Right ventricle myocardium inferior (tissue), 1 donor: ENCODE measurements at regions of chr9 and their contacts with region 1.

Region 1: DNA sequence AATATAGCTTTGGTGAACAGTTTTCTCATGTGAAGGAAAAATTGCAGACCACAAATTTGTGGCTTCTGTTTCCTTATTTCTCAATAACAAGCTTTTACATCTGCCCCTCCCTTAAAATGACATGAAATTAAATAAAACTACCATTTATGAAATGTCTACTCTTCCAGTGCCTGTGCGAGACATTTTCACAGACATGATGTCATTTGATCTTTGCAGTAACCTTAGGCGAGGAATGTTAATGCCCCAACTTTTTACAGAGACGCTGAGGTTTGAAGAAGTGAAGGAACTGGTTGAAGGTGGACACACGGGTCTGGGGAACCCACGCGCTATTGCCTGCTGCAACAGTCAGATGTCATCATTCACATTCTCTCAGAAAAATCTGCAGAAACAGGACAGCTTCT is 61.5 kb downstream of the OSTF1 start:
- DNase-seq: no peak
- ATAC-seq: no peak

Region 2: DNA sequence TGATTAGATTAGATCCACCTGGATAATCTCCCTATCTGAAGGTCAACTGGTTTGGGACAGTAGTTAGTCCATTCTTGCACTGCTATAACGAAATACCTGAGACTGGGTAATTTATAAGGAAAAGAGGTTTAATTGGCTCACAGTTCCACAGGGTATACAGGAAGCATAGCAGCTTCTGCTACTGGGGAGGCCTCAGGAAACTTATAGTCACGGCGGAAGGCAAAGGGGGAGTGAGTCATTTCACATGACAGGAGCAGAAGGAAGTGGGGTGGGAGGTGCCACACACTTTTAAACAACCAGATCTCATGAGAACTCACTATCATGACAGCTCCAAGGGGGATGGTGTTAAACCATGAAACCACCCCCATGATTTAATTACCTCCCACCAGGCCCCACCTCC is 207.0 kb before region 1 on chr9:
- intact Hi-C with region 1: no loop called
- DNase-seq: no peak
- ATAC-seq: no peak

Region 3: DNA sequence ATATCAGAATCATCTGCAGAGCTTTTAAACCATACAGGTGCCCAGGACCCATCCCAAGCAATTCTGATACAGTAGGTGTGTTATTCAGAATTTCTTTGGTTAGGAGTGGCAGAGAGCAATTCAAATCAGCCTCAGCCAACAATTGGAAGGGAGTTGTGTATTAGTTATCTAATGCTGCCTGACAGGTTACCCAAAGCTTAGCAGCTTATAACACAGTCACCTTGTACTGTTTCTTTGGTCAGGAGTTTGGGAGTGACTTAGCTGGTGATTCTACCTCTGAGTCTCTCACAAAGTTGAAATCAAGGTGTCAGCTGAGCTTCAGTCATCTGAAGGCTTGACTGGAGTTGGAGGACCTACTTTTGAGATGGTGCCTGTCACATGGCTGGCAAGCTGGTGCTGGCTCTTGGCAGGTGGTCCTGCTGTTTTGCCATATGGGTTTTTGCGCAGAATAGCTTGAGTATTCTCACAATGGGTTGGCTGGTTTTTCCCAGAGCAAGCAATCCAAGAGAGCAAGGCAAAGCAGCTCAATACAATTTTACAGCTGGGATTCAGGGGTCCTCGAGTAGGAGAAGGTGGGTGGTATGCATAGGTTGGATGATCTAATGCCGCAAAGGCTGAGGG is 103.0 kb before region 1 on chr9:
- intact Hi-C with region 1: no loop called
- DNase-seq: no peak
- ATAC-seq: no peak

Region 4: GRCh38 chr9:75185585-75186170 is 35.8 kb after region 1 on chr9:
- intact Hi-C with region 1: loop called (anchors 5 kb)
- DNase-seq: no peak
- ATAC-seq: no peak